HepG2 (cell line): ENCODE measurements at regions of chr4 and their contacts with region 1.

Region 1: DNA sequence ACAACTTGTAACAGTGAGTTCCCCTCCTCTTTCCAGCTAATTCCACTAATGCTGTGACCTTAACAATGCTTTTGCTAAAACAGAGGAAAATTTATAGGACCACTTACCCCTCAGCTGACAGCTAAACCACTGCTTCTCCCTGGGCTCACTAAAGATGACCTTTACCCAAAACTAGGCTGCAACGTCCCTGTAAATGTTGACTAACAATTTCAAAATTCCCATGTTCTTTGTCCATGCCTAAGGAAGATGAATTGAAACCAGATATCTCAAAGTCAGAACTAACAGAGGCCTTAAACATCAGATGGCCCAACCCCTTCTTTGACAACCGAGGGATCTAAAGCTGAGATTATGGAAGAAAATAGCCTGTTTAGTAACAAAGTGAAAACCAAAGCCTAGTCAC is 32.5 kb downstream of the AFAP1 start:
- DNase-seq: peak; percentile 28
- ATAC-seq: peak; percentile 51; the same call in 2 of the 3 replicates
- H3K4me3 ChIP-seq: no peak overlapping the region
- H3K27ac ChIP-seq: no peak overlapping the region
- H3K4me1 ChIP-seq: peaks cover 50% of the 10 kb centered on the region
- H3K27me3 ChIP-seq: no peaks in the 10 kb centered on the region
- CTCF ChIP-seq: no peak
- EP300 ChIP-seq: no peak
- POLR2A ChIP-seq: no peak
- RAD21 ChIP-seq: no peak

Region 2: GRCh38 chr4:7736436-7737269 is 170.5 kb before region 1 on chr4:
- CTCF ChIA-PET with region 1: no interaction called
- POLR2A ChIA-PET with region 1: no interaction called
- in situ Hi-C with region 1: no loop called
- intact Hi-C with region 1: no loop called
- DNase-seq: no peak
- ATAC-seq: no peak
- H3K4me3 ChIP-seq: no peak overlapping the region
- H3K27ac ChIP-seq: no peak overlapping the region
- H3K4me1 ChIP-seq: no peaks in the 10 kb centered on the region
- H3K27me3 ChIP-seq: no peaks in the 10 kb centered on the region
- CTCF ChIP-seq: no peak
- EP300 ChIP-seq: no peak
- POLR2A ChIP-seq: no peak
- RAD21 ChIP-seq: no peak

Region 3: DNA sequence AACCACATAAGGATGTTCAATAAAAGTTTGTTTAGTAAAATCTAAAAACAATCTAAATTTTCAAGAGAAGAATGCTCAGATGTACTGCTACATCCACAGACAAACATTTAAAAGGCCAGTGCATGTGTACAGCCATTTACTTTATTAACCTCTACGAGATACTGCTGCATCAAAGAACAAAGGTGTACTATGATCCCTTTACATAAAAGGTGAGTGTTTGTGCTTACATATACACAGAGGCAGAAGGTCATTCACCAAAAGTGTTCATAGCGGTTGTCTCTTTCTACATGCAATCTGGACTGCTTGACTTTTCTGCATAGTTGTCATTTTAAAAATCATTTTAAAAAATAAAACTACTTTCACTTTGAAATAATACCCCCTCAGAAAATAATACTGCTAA is 49.1 kb before region 1 on chr4:
- CTCF ChIA-PET with region 1: no interaction called
- POLR2A ChIA-PET with region 1: no interaction called
- in situ Hi-C with region 1: no loop called
- intact Hi-C with region 1: loop called (anchors 1 kb)
- DNase-seq: peak; percentile 85
- ATAC-seq: peak; percentile 95
- H3K4me3 ChIP-seq: peak overlapping the region in 2 of 3 experiments; percentile 21 to 47; a peak in 2 of 6 replicates
- H3K27ac ChIP-seq: peak overlapping the region; percentile 90
- H3K4me1 ChIP-seq: peaks cover 31% of the 10 kb centered on the region
- H3K27me3 ChIP-seq: no peaks in the 10 kb centered on the region
- CTCF ChIP-seq: no peak
- EP300 ChIP-seq: peak in 1 of 2 experiments; percentile 78; a peak in 3 of 4 replicates
- POLR2A ChIP-seq: no peak
- RAD21 ChIP-seq: no peak

Region 4: GRCh38 chr4:7987148-7987989 is 80.2 kb after region 1 on chr4:
- CTCF ChIA-PET with region 1: no interaction called
- POLR2A ChIA-PET with region 1: no interaction called
- in situ Hi-C with region 1: no loop called
- intact Hi-C with region 1: no loop called
- DNase-seq: peak; percentile 69
- ATAC-seq: peak; percentile 68
- H3K4me3 ChIP-seq: no peak overlapping the region
- H3K27ac ChIP-seq: no peak overlapping the region
- H3K4me1 ChIP-seq: peaks cover 32% of the 10 kb centered on the region
- H3K27me3 ChIP-seq: peaks cover 6 to 36% of the 10 kb centered on the region in 2 experiments
- CTCF ChIP-seq: peak; percentile 95
- EP300 ChIP-seq: no peak
- POLR2A ChIP-seq: no peak
- RAD21 ChIP-seq: peak; percentile 86